Gastrocnemius medialis (tissue), 4 donors: ENCODE measurements at regions of chr17 and their contacts with region 1.

Region 1: GRCh38 chr17:55496094-55496881 is 15.0 kb downstream of the SMIM36 start:
- DNase-seq: no peak
- ATAC-seq: peak; percentile 30 to 51
- H3K4me3 ChIP-seq: no peak overlapping the region
- H3K27ac ChIP-seq: no peak overlapping the region
- H3K4me1 ChIP-seq: peaks cover 6 to 8% of the 10 kb centered on the region in 2 donors
- H3K27me3 ChIP-seq: no peaks in the 10 kb centered on the region
- CTCF ChIP-seq: no peak
- POLR2A ChIP-seq: no peak

Region 2: DNA sequence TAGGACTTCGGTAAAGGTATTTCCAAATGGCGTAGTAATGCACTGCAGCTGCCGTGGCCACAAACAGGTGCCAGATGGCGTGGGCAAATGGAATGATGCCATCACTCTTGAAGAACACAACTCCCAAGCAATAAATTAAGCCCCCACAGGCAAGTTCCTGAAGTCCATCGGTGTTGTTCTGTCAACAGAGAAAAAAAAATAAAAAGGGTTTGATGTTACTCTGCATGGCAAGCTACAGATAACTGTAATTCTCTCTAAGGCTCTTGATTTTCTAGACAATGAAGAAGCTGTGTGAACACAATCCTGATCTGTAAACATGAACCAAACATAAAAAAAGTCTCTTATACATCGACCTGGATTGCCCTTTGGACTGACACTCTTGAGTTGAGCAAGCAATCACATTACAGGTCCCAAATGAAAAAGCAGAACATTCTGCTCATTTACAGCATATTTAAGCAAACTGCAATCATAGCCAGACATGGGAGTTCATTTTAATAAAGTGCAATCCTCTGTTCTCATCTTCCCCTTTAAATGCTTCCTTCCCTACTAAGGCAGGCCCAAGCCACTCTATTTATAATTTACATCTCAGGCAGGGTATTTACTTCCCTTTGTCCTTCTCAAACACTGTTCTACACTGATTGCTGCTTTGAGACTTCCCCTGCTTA is 101.8 kb before region 1 on chr17:
- in situ Hi-C with region 1: loop called in 1 of 4 experiments (anchors 25 kb)
- intact Hi-C with region 1: no loop called
- DNase-seq: no peak
- ATAC-seq: peak in 1 of 2 donors; percentile 73
- H3K4me3 ChIP-seq: no peak overlapping the region
- H3K27ac ChIP-seq: peak overlapping the region in 2 of 4 donors; percentile 23 to 37
- H3K4me1 ChIP-seq: peaks cover 9 to 12% of the 10 kb centered on the region in 2 donors
- H3K27me3 ChIP-seq: no peaks in the 10 kb centered on the region
- CTCF ChIP-seq: no peak
- POLR2A ChIP-seq: no peak

Region 3: GRCh38 chr17:55576237-55576995 is 80.1 kb after region 1 on chr17:
- in situ Hi-C with region 1: no loop called
- intact Hi-C with region 1: no loop called
- DNase-seq: no peak
- ATAC-seq: peak; percentile 47 to 51
- H3K4me3 ChIP-seq: peak overlapping the region; percentile 36 to 42 (median 40)
- H3K27ac ChIP-seq: peak overlapping the region; percentile 56 to 72 (median 62)
- H3K4me1 ChIP-seq: peaks cover 0 to 5% of the 10 kb centered on the region in 2 donors
- H3K27me3 ChIP-seq: no peaks in the 10 kb centered on the region
- CTCF ChIP-seq: no peak
- POLR2A ChIP-seq: no peak

Region 4: GRCh38 chr17:55664287-55664686 is 168.0 kb after region 1 on chr17:
- in situ Hi-C with region 1: no loop called
- intact Hi-C with region 1: no loop called
- DNase-seq: no peak
- ATAC-seq: no peak
- H3K4me3 ChIP-seq: no peak overlapping the region
- H3K27ac ChIP-seq: no peak overlapping the region
- H3K4me1 ChIP-seq: peaks cover 0 to 4% of the 10 kb centered on the region in 2 donors
- H3K27me3 ChIP-seq: no peaks in the 10 kb centered on the region
- CTCF ChIP-seq: no peak
- POLR2A ChIP-seq: no peak

Region 5: DNA sequence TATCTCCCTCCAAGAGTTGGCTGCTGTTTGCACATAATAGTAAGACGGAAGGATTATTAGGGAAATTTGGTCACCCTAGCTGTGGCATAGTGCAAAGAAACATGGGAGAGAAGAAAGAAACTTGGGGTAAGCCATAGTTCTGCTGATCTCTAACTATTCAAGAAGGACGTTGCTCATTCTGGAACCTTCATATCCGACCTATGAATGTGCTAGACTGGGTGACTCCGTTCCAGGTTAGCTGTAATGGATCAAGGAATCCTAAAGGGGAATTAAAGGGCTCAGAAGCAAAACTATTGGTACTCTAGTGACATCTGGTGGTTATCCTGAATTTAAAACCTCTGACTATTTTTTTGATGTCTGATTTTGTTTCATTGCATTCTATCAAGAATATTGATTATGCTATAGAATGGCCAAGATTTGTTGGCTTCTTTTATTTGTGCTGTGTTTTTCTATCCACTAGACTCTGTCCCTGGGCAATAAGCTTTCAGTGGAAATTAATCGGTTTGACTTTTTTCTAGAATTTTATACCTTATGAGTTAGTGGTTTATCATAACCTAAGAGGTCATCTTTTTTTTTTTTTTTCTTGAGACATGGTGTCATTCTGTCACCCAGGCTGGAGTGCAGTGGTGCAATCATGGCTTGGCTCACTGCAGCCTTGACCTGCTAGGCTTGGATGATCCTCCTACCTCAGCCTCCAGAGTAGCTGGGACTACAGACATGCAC is 274.0 kb after region 1 on chr17:
- in situ Hi-C with region 1: no loop called
- intact Hi-C with region 1: no loop called
- DNase-seq: no peak
- ATAC-seq: peak; percentile 70 to 83
- H3K4me3 ChIP-seq: no peak overlapping the region
- H3K27ac ChIP-seq: peak overlapping the region; percentile 20 to 48 (median 38)
- H3K4me1 ChIP-seq: peaks cover 10 to 13% of the 10 kb centered on the region in 2 donors
- H3K27me3 ChIP-seq: no peaks in the 10 kb centered on the region
- CTCF ChIP-seq: peak; percentile 69 to 75 (median 72)
- POLR2A ChIP-seq: no peak